Posterior vena cava (tissue), 2 donors: ENCODE measurements at regions of chr13 and their contacts with region 1.

Region 1: DNA sequence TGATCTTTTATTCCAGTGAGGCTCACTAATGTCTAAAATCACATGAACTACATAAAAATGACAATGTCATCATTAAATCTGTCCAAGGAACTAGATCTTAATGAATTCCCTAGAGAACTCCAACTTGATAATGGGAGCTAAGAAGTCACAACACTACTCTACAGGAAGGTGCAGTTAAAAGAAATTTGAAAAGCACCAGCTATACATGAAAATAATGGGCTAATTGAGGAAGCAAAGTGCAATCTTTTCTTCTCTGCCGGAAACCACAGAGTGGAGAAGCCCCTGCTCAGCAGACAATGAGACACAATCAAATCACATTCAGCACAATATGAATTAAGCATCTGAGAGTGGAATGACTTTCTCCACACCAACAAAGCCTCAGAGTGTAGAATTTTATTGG is 261.7 kb downstream of the LHFPL6 start:
- DNase-seq: no peak

Region 2: DNA sequence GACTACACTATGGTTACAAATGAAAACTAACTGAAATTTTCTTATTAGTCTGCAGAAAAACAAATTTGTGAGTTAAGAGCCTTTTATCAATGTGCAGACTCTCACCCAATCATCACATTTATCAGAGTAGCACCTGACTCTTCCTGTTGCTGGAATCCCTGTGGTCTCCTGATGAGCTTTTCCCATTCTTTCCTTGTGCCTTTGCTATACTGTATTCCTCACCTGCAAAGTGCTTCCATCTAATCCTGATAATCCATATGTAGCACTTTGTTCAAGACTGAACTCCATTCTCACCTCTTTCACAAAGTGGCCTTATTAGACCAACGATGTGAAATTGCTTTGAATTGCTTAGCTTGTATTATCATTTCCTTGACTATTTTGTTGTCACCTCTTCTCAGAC is 36.4 kb after region 1 on chr13:
- intact Hi-C with region 1: loop called in 1 of 2 experiments (anchors 1 kb)
- DNase-seq: no peak